Heart right ventricle (tissue), 16 donors: ENCODE measurements at regions of chr22 and their contacts with region 1.

Region 1: DNA sequence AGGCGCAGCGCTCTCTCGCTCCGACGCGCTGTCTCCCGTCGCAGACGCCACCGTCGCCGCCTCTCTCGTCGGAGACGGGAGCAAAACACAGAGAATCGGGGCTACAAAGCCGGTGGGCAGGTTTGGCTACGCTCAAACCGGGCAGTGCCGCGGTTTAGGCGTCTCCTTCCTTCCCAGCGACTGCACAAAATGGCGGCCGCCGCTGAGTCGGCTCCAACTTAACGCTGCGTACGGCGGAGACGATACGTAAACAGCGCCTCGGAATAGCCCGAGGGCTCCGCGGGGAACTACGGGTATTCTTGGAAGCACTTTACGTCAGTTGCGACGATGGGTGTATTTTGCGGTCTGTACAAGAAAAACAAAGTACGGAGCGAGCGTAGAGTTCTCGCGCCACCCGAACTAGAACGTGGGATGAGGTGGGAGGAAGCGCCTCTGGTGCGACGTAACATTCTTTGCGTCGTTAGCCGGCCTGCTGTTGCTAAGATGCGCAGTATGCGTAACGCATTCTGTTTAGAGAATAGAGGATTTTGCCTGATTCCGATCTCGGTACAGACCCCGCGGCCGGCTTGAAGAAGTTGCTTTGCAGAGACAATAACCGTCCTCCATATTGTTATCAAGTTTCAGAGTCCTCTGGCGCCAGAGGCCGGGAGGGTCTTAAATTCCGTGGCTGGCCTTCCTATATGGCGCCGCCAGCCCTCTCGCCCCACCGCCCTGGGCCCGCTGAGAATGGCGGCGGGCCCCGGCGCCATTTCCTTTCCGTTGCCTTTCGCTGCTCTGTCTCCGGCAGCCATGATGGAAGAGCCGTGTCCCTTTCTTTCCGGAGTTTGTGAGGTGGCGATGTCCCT is at the start of gene DDX17:
- DNase-seq: peak; percentile 91 to 96
- ATAC-seq: peak; percentile 84 to 90 (median 87)
- H3K4me3 ChIP-seq: peak within 1 kb of the TSS; percentile 70 to 88 (median 80)
- H3K27ac ChIP-seq: peak within 1 kb of the TSS; percentile 97 to 100 (median 100)
- H3K4me1 ChIP-seq: peaks cover 2 to 45% (median 39%) of the 10 kb centered on the region in 9 donors
- H3K27me3 ChIP-seq: no peaks in the 10 kb centered on the region
- CTCF ChIP-seq: no peak
- total RNA-seq, gene DDX17: 156 to 236 (median 169) TPM

Region 2: GRCh38 chr22:38398609-38399461 is 107.5 kb before region 1 on chr22:
- intact Hi-C with region 1: loop called in 3 of 10 experiments (anchors 5 kb)
- DNase-seq: peak; percentile 86 to 91
- ATAC-seq: peak; percentile 89 to 94 (median 91)
- H3K4me3 ChIP-seq: peak overlapping the region; percentile 81 to 100 (median 94)
- H3K27ac ChIP-seq: peak overlapping the region; percentile 88 to 100 (median 98)
- H3K4me1 ChIP-seq: peaks cover 2 to 45% (median 32%) of the 10 kb centered on the region in 9 donors
- H3K27me3 ChIP-seq: no peaks in the 10 kb centered on the region
- CTCF ChIP-seq: peak in 2 of 9 donors; percentile 15 to 19

Region 3: GRCh38 chr22:38461414-38462081 is 44.8 kb before region 1 on chr22:
- intact Hi-C with region 1: loop called in 4 of 10 experiments (anchors 5 kb)
- DNase-seq: peak; percentile 84 to 90
- ATAC-seq: peak; percentile 60 to 83 (median 77)
- H3K4me3 ChIP-seq: peak overlapping the region in 7 of 10 donors; percentile 6 to 30 (median 24)
- H3K27ac ChIP-seq: peak overlapping the region in 6 of 10 donors; percentile 30 to 75 (median 70)
- H3K4me1 ChIP-seq: peaks cover 3 to 50% (median 21%) of the 10 kb centered on the region in 9 donors
- H3K27me3 ChIP-seq: peaks cover 0 to 96% (median 23%) of the 10 kb centered on the region in 7 donors
- CTCF ChIP-seq: peak in 1 of 9 donors; percentile 17

Region 4: DNA sequence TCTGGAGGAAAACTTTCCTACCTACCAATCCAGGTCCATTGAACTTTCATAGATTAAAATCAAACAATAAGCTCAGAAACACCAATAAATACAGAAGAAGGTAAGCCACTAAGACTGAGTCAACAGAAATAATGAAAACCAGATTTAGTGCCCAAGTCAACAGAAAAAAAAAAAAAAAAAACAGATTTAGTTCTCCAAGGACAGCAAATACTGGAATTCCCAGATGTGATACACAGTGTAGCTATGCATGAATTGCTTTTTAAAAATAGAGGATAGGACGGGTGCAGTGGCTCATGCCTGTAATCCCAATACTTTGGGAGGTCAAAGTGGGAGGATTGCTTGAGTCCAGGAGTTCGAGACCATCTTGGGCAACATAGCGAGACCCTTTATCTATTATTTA is 47.9 kb after region 1 on chr22:
- intact Hi-C with region 1: no loop called
- DNase-seq: no peak
- ATAC-seq: no peak
- H3K4me3 ChIP-seq: no peak overlapping the region
- H3K27ac ChIP-seq: no peak overlapping the region
- H3K4me1 ChIP-seq: peaks cover 0 to 5% (median 0%) of the 10 kb centered on the region in 9 donors
- H3K27me3 ChIP-seq: peaks cover 0 to 81% (median 0%) of the 10 kb centered on the region in 7 donors
- CTCF ChIP-seq: no peak

Region 5: GRCh38 chr22:38569972-38570778 is 63.8 kb after region 1 on chr22 and contains the start of gene DMC1:
- intact Hi-C with region 1: loop called in 7 of 10 experiments (anchors 2 to 10 kb)
- DNase-seq: peak; percentile 94 to 97
- ATAC-seq: peak; percentile 96 to 98 (median 96)
- H3K4me3 ChIP-seq: peak within 1 kb of the TSS; percentile 43 to 78 (median 66)
- H3K27ac ChIP-seq: peak within 1 kb of the TSS; percentile 68 to 90 (median 80)
- H3K4me1 ChIP-seq: peaks cover 2 to 35% (median 19%) of the 10 kb centered on the region in 9 donors
- H3K27me3 ChIP-seq: peaks cover 0 to 45% (median 0%) of the 10 kb centered on the region in 7 donors
- CTCF ChIP-seq: peak in 1 of 9 donors; percentile 11
- total RNA-seq, gene DMC1: 0.40 to 3.2 (median 1.4) TPM

Region 6: DNA sequence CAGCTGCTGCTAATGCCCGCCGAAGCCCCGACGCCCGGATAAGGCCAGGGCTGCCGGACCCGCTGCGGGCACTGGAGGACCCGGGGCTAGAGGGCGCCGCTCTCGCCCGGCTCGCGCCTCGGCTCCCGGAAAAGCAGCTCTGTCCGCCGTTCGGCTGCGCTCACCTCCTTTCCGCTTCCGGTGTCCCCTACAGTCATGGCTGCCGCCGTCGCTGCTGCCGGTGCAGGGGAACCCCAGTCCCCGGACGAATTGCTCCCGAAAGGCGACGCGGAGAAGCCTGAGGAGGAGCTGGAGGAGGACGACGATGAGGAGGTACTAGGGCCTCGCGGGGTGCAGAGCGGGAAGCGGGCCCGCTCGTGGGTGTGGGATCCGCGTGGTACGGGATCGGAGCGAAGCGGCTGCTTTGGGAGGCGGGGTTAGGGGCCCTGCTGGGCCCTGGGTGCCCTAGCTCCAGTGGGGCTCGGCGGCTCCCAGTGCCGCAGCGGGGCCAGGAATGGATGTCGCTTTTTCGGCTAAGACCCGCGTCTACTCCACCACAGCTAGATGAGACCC is 175.5 kb after region 1 on chr22 and contains the start of gene TOMM22:
- intact Hi-C with region 1: loop called in 1 of 10 experiments (anchors 10 kb)
- DNase-seq: peak; percentile 87 to 90
- ATAC-seq: peak; percentile 98 to 100 (median 99)
- H3K4me3 ChIP-seq: peak within 1 kb of the TSS; percentile 62 to 99 (median 86)
- H3K27ac ChIP-seq: peak within 1 kb of the TSS; percentile 0 to 88 (median 78)
- H3K4me1 ChIP-seq: peaks cover 4 to 17% (median 13%) of the 10 kb centered on the region in 9 donors
- H3K27me3 ChIP-seq: no peaks in the 10 kb centered on the region
- CTCF ChIP-seq: peak in 8 of 9 donors; percentile 43 to 90 (median 65)
- total RNA-seq, gene TOMM22: 55.7 to 86.2 (median 72.2) TPM